Activated T-helper 1 cell treated with anti-CD3 and anti-CD28 coated beads, Interleukin-12 subunit alpha, Interleukin-12 subunit beta, Interleukin-2, Interleukin-4 antibody, amounts not matched to agents 30 ng/mL and 10 ng/mL and 1 ng/mL, durations not matched to agents 14 hours and 24 hours and 36 hours (primary cell): ENCODE measurements at regions of chr3 and their contacts with region 1.

Region 1: GRCh38 chr3:129183569-129184395 is at the start of gene CNBP:
- DNase-seq: peak; percentile 91
- H3K4me3 Mint-ChIP-seq: peak within 1 kb of the TSS; percentile 97
- H3K27ac Mint-ChIP-seq: peak within 1 kb of the TSS; percentile 98
- H3K4me1 Mint-ChIP-seq: peaks cover 35% of the 10 kb centered on the region
- H3K27me3 Mint-ChIP-seq: no peaks in the 10 kb centered on the region
- total RNA-seq, gene CNBP: 408 and 425 TPM in 2 replicates

Region 2: DNA sequence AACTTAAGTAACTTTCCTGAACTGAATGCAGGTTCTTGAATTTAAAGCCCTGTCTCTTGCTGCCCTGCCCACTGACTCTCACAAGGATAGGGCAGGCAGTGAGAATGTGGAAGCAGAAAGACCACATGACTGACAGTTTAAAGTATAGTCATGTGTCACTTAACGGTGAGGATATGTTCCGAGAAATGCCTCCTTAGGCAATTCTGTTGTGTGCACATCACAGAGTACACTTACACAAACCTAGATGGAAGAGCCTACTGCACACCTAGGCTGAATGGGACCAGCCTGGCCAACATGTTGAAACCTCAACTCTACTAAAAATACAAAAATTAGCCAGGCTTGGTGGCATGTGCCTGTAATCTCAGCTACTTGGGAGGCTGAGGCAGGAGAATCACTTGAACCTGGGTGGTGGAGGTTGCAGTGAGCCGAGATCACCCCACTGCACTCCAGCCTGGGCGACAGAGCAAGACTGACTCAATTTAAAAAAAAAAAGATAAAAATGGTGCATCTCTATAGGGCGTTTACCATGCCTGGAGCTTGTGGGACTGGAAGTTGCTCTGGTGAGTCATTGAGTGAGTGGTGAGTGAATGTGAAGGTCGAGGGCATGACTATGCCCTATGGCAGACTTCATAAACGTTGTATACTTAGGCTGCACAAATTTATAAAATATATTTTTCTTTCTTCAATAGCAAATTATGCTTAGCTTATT is 46.7 kb after region 1 on chr3:
- intact Hi-C with region 1: loop called (anchors 1 kb)
- DNase-seq: peak; percentile 35
- H3K4me3 Mint-ChIP-seq: peak overlapping the region; percentile 57
- H3K27ac Mint-ChIP-seq: peak overlapping the region; percentile 50
- H3K4me1 Mint-ChIP-seq: peaks cover 74% of the 10 kb centered on the region
- H3K27me3 Mint-ChIP-seq: no peaks in the 10 kb centered on the region